Left ventricle myocardium superior (tissue), 1 donor: ENCODE measurements at regions of chr11 and their contacts with region 1.

Region 1: GRCh38 chr11:110195845-110196754 is 100.3 kb downstream of the RDX start:
- DNase-seq: no peak
- ATAC-seq: no peak

Region 2: DNA sequence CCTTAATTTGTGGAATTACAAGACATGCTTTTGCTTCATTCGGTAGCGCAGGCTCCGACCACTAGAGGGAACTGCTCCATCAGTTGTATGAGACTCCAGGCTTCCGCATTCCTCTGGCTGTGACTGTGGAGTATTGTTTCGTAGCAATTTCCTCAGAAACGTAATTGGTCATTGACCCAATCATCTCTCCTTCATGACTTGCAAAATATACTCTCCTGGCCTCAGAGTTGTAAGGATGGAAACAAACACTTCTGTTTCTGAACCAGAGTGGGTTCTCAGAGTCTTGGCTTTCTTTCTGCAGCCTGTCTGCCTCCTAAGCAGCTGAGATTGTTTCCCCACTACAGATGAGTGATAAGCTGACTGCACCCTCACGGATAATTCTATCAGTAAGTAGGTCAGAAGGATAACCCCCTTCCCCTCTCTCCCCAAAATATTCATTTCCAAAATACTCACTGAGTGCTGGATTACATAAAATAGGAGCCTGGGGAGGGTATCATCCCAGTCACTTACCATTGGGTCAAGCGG is 249.7 kb before region 1 on chr11:
- intact Hi-C with region 1: loop called (anchors 10 kb)
- DNase-seq: peak; percentile 84
- ATAC-seq: peak; percentile 99

Region 3: GRCh38 chr11:110026858-110027626 is 169.1 kb before region 1 on chr11:
- intact Hi-C with region 1: no loop called
- DNase-seq: no peak
- ATAC-seq: peak; percentile 30

Region 4: DNA sequence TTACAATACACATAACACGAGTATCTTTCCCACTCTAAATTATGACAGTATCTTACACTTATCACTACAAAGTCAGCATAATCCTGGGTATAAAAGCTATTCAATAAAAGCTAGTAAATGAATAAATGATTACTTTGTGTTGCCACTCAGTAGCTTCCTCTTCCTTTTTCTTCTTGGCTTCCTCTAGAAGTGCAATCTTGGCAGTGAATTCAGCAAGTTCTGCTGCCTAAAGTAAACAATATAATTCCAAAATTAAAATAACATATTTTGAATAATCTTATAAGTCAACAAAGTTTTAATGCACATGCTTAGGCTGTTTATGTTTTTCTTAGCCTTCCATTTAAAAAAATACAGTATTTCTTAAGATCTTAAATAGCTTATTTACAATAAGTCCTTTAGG is 39.9 kb after region 1 on chr11:
- intact Hi-C with region 1: no loop called
- DNase-seq: no peak
- ATAC-seq: no peak

Region 5: DNA sequence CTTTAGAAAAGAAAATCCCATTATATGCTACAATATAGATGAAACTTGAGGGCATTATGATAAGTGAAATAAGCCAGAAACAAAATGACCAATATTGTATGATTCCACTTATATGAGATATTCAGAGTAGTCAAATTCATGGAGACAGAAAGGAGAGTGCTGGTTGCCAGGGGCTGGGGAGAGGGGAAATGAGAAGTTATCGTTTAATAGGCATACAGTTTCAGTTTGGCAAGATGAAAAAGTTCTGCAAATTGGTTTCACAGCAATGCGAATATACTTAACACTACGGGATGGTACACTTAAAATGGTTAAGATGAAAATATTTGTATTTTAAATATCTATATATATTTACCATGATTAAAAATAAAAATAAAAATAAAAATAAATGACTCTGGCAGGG is 131.4 kb after region 1 on chr11:
- intact Hi-C with region 1: no loop called
- DNase-seq: no peak
- ATAC-seq: no peak

Region 6: GRCh38 chr11:110366291-110366690 is 170.2 kb after region 1 on chr11:
- intact Hi-C with region 1: loop called (anchors 2 kb)
- DNase-seq: peak; percentile 72
- ATAC-seq: peak; percentile 86

Region 7: DNA sequence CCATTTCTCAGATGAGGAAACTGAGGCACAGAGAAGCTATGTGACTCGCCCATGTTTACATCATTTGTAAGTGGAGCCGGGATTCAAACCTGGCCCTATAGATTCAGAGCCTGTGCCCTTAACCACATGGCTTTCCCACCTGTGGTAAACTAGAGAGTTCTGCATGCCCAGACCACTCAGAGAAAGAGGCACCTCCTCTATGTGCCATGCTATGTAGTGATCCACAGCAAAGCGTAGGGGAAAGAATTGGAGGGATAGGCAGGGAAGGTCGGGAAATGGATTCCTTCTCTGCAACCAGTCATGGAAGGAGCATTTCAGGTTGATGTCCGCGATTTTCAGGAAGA is 1034.0 kb after region 1 on chr11:
- intact Hi-C with region 1: loop called (anchors 10 kb)
- DNase-seq: no peak
- ATAC-seq: peak; percentile 38